ENCODE measurements at regions of chr1 and their contacts with region 1.

Region 1: GRCh38 chr1:32997381-32997891 is 32.8 kb upstream of the RNF19B start:
- DNase-seq: peak; percentile 63

Region 2: DNA sequence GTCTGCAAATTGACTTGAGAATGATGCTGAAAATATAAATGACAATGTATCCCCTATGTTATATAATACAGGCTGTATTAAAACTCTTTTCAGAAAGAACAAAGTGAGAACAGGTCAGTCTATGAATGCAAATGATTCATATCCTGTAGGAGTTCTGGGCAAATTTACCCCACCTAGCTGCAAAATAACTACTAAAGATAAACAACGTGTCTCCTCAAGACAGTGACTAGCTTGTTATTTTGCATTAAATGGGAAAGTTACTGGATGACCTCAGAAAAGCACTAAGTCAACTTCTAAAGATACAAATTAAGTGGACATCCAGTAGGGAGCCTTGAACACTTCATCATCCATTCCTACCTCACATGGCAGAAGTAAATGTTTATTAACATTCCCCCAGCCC is 43.9 kb before region 1 on chr1:
- intact Hi-C with region 1: loop called in 1 of 2 experiments (anchors 5 kb)
- DNase-seq: no peak